MCF 10A (cell line): ENCODE measurements at regions of chr5 and their contacts with region 1.

Region 1: GRCh38 chr5:135034236-135034962 is 371 bp upstream of the PITX1 start:
- DNase-seq: peak; percentile 78
- H3K4me3 Mint-ChIP-seq: peak overlapping the region; percentile 88
- H3K27ac Mint-ChIP-seq: no peak overlapping the region
- H3K4me1 Mint-ChIP-seq: peaks cover 14% of the 10 kb centered on the region
- H3K27me3 Mint-ChIP-seq: no peaks in the 10 kb centered on the region
- CTCF ChIP-seq: no peak

Region 2: DNA sequence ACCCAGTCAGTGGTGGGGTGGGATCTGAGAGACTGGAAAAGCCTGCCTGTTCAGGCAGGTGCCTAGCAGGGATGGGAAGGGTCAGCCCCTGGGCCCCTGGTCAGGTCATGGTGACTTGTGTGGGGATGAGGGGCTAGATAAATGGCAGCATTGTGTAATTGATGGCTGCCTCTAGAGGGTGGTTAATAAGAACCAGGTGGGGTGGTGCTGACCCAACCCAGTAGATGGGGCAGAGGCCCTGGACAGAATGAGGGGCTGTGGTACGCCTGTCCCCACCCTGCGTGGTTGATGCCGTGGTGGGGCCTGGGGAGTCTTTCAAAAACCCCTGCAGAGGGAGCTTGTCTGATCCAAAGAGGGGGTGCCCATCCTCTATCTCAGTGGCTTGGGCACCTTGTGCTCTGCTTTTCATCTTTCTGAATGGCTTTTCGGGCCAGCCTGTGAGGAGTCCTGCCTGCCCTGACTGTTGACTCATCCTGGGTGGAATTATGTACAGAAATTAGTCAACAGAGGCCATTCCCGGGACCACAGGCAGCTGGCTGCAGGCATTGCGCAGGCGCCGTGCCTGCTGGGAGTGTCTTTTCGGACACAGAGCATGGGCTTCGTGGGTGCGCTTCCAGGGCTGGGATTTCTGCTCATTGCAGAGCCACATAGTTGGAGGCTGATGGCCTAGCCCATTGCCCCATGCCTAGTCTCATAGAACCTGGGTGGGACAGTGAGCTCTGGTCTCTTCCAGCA is 93.3 kb after region 1 on chr5:
- CTCF ChIA-PET with region 1: interaction called, 3 read pairs
- POLR2A ChIA-PET with region 1: interaction called, 18 read pairs
- intact Hi-C with region 1: no loop called
- DNase-seq: peak; percentile 98
- H3K4me3 Mint-ChIP-seq: no peak overlapping the region
- H3K27ac Mint-ChIP-seq: peak overlapping the region; percentile 49
- H3K4me1 Mint-ChIP-seq: peaks cover 36% of the 10 kb centered on the region
- H3K27me3 Mint-ChIP-seq: no peaks in the 10 kb centered on the region
- CTCF ChIP-seq: no peak

Region 3: DNA sequence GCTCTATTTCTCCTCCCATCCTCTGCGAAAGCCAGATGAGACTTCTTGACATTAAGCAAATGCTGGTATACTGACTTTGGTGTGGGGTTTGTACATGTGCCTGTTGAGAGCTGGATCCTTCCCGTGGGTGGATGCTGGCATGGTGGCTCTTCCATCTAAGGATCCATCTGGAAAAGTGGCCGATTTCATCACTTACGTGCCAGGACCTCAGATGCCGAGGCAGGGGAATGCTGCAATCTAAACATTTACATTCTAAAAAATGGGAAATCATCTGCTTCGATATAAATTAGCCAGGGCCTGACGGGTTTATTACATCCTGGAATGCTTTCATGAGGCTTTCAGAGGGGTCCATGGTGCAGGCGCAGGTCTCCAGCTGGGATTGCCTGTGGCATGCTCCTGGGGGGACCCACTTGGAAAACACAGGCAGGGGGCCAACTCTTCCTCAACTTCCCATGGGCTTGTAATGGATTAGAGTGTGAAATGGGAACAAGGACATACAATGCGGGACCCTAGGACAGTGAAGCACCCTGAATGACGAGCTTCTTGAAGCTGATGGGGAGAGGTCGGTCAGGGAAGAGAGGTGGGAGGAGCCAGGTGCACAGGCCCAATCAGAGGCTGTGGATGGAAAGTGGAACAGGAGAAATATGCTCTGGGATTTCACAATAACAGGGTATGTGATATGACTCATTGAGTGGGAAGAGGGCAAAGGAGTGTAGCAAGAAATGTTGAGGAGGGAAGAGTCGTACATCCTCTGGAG is 105.2 kb after region 1 on chr5:
- CTCF ChIA-PET with region 1: no interaction called
- POLR2A ChIA-PET with region 1: interaction called, 55 read pairs
- intact Hi-C with region 1: loop called (anchors 2 kb)
- DNase-seq: peak; percentile 99
- H3K4me3 Mint-ChIP-seq: peak overlapping the region; percentile 30
- H3K27ac Mint-ChIP-seq: peak overlapping the region; percentile 3
- H3K4me1 Mint-ChIP-seq: peaks cover 65% of the 10 kb centered on the region
- H3K27me3 Mint-ChIP-seq: no peaks in the 10 kb centered on the region
- CTCF ChIP-seq: no peak

Region 4: GRCh38 chr5:135154197-135154596 is 119.8 kb after region 1 on chr5:
- CTCF ChIA-PET with region 1: interaction called, 3 read pairs
- POLR2A ChIA-PET with region 1: interaction called, 7 read pairs
- intact Hi-C with region 1: loop called (anchors 1 kb)
- DNase-seq: peak; percentile 93
- H3K4me3 Mint-ChIP-seq: no peak overlapping the region
- H3K27ac Mint-ChIP-seq: no peak overlapping the region
- H3K4me1 Mint-ChIP-seq: peaks cover 34% of the 10 kb centered on the region
- H3K27me3 Mint-ChIP-seq: no peaks in the 10 kb centered on the region
- CTCF ChIP-seq: no peak

Region 5: GRCh38 chr5:135185481-135186065 is 151.2 kb after region 1 on chr5:
- CTCF ChIA-PET with region 1: interaction called, 14 read pairs
- POLR2A ChIA-PET with region 1: interaction called, 13 read pairs
- intact Hi-C with region 1: loop called (anchors 1 kb)
- DNase-seq: peak; percentile 40
- H3K4me3 Mint-ChIP-seq: no peak overlapping the region
- H3K27ac Mint-ChIP-seq: no peak overlapping the region
- H3K4me1 Mint-ChIP-seq: no peaks in the 10 kb centered on the region
- H3K27me3 Mint-ChIP-seq: no peaks in the 10 kb centered on the region
- CTCF ChIP-seq: no peak

Region 6: DNA sequence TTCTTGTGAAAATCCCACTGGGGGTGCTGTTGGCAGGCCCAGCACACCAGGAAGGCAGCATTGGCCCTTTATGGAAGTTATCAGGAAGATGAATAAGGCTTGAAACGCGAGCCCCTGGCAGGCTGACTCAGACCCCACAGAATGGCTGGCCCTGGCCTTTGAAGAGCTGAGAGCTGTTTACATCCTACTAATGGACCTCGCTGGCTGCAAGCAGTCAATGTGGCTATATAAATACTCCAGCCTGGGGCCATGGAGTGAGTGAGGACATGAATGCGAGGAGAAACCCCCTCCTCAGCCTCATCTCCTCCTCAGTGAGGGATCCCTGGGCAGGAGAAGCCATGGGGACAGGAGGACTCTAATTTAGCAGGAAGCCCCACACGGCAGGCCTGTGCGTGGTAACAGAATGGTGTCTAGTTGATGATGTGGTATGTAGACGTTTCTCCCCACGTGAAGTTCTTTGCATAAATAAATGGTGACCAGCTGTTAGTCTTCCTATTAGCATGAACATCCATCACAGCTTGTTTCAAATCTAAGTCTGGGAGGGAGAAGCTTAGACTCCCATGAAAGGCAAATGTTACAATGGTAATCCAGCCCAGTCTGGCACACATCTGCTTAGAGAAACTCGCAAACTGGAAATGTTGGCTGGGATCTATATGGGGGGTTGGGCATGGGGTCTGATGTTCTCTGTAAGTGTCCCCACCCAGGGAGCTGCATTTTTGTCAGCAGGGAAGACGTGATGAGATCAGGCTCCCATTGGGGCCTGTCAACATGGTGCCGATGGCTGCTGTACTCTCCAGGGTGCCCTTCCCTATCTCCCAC is 174.7 kb after region 1 on chr5:
- CTCF ChIA-PET with region 1: interaction called, 3 read pairs
- POLR2A ChIA-PET with region 1: no interaction called
- intact Hi-C with region 1: loop called (anchors 5 kb)
- DNase-seq: peak; percentile 90
- H3K4me3 Mint-ChIP-seq: no peak overlapping the region
- H3K27ac Mint-ChIP-seq: peak overlapping the region; percentile 8
- H3K4me1 Mint-ChIP-seq: peaks cover 14% of the 10 kb centered on the region
- H3K27me3 Mint-ChIP-seq: no peaks in the 10 kb centered on the region
- CTCF ChIP-seq: no peak

Region 7: GRCh38 chr5:135332519-135333150 is 298.2 kb after region 1 on chr5:
- CTCF ChIA-PET with region 1: interaction called, 3 read pairs
- POLR2A ChIA-PET with region 1: interaction called, 3 read pairs
- intact Hi-C with region 1: loop called (anchors 5 kb)
- DNase-seq: peak; percentile 80
- H3K4me3 Mint-ChIP-seq: no peak overlapping the region
- H3K27ac Mint-ChIP-seq: no peak overlapping the region
- H3K4me1 Mint-ChIP-seq: peaks cover 14% of the 10 kb centered on the region
- H3K27me3 Mint-ChIP-seq: no peaks in the 10 kb centered on the region
- CTCF ChIP-seq: peak; percentile 75